HCT116 (cell line): ENCODE measurements at regions of chr10 and their contacts with region 1.

Region 1: GRCh38 chr10:128000471-128001362 is 93.8 kb downstream of the PTPRE start:
- DNase-seq: no peak
- ATAC-seq: 0 out of 2 replicates have a peak, but pooled peaks have one; percentile 40
- H3K4me3 ChIP-seq: no peak overlapping the region
- H3K27ac ChIP-seq: no peak overlapping the region
- H3K4me1 ChIP-seq: peaks cover 0 to 7% of the 10 kb centered on the region in 2 experiments; a peak in 1 of 4 replicates
- H3K27me3 ChIP-seq: peaks cover 10% of the 10 kb centered on the region; the same call in 1 of the 2 replicates
- CTCF ChIP-seq: no peak
- POLR2A ChIP-seq: no peak
- RAD21 ChIP-seq: no peak

Region 2: GRCh38 chr10:127889605-127890195 is 111.0 kb before region 1 on chr10:
- CTCF ChIA-PET with region 1: no interaction called
- POLR2A ChIA-PET with region 1: no interaction called
- RAD21 ChIA-PET with region 1: no interaction called
- intact Hi-C with region 1: no loop called
- DNase-seq: no peak
- ATAC-seq: peak; percentile 22; the same call in 1 of the 2 replicates
- H3K4me3 ChIP-seq: no peak overlapping the region
- H3K27ac ChIP-seq: no peak overlapping the region
- H3K4me1 ChIP-seq: no peaks in the 10 kb centered on the region
- H3K27me3 ChIP-seq: no peaks in the 10 kb centered on the region
- CTCF ChIP-seq: no peak
- POLR2A ChIP-seq: no peak
- RAD21 ChIP-seq: no peak

Region 3: DNA sequence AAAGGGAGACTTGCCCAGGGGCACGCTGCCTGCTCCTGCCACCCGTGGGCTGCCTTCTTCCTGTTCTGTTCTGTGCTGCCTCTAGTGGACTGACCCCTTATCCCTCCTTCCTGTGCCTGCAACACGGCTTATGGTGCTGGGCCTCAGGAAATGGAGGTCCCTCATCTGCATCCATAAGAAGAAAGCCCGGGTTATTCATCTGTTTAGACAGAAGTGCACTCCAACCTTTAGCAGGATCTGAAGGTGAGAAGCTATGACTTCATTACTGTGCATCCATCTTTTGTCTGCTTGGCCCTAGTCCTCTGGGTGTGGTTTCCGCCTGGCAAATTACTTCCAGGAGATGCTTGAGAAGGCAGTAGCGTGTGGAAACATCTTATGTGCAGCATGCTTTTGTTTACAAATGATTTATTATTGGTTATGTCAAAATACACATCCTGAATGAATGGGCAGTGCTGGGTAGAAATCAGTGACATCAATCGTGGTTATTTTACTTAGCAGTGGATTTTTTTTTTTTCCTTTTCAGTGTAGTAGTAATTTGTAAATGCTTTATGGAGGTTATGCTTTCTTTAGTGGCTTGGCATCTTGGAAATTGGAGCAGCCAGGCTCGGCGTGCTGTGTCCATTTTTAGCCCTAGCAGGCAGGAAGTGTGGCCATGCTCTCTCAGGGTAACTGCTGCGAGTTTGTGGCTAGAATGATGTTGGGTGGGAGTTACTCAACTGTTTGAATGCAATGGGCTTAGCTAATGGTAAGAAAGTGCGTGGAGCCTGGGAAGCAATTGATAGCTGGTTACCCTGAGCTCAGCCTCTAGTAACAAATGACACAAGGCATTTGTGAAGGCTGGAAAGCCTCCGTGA is 81.1 kb before region 1 on chr10:
- CTCF ChIA-PET with region 1: no interaction called
- POLR2A ChIA-PET with region 1: no interaction called
- RAD21 ChIA-PET with region 1: no interaction called
- intact Hi-C with region 1: no loop called
- DNase-seq: no peak
- ATAC-seq: peak; percentile 68
- H3K4me3 ChIP-seq: no peak overlapping the region
- H3K27ac ChIP-seq: no peak overlapping the region
- H3K4me1 ChIP-seq: peaks cover 21 to 58% of the 10 kb centered on the region in 2 experiments
- H3K27me3 ChIP-seq: no peaks in the 10 kb centered on the region
- CTCF ChIP-seq: peak in 2 of 3 experiments; percentile 66 to 67; a peak in 4 of 6 replicates
- POLR2A ChIP-seq: no peak
- RAD21 ChIP-seq: 0 out of 2 replicates have a peak, but pooled peaks have one; percentile 6

Region 4: DNA sequence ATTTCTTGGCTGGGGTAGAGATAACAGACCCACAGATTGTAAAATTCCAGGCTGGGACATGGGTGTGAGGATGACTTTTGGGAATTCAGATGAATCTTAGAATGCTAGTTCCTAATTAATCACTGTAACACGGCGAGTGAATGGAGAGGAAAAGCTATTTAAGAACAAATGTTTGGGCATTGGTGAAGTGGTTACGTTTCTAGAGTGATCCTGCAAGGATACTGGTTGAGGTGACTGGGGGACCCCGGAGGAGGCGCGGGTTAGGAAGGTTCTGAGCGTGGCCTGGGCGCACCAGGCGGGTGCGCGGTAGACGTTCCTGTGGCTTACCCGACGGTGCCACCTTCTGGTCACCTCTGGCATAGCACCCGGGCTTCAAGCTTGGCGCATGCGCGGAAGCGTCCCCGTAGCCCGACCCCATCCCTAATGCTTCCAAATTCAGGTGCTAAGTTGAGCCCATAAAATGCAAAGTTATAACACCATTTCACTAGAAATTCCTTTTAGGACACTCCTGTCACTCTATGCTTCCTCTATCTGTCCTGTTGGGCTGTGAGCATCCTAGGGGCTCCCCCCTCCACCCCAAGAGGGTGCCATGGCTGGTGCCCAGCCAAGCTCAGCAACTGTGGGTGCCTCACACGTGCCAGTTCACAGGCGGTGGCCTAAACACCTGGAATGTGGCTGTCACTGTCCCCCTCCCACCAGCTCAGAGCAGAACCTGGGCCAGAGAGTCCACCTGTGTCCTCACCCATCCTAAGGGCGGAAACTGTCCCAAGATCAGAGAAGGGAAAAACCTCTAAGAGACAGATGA is 10.7 kb after region 1 on chr10:
- CTCF ChIA-PET with region 1: interaction called, 10 read pairs
- POLR2A ChIA-PET with region 1: no interaction called
- RAD21 ChIA-PET with region 1: no interaction called
- intact Hi-C with region 1: no loop called
- DNase-seq: peak; percentile 54
- ATAC-seq: peak; percentile 95
- H3K4me3 ChIP-seq: no peak overlapping the region; a peak in 1 of 4 replicates
- H3K27ac ChIP-seq: no peak overlapping the region
- H3K4me1 ChIP-seq: peaks cover 3 to 9% of the 10 kb centered on the region in 2 experiments; a peak in 3 of 4 replicates
- H3K27me3 ChIP-seq: no peaks in the 10 kb centered on the region; the same call in 1 of the 2 replicates
- CTCF ChIP-seq: peak; percentile 98 to 99 (median 99)
- POLR2A ChIP-seq: no peak
- RAD21 ChIP-seq: peak; percentile 100

Region 5: DNA sequence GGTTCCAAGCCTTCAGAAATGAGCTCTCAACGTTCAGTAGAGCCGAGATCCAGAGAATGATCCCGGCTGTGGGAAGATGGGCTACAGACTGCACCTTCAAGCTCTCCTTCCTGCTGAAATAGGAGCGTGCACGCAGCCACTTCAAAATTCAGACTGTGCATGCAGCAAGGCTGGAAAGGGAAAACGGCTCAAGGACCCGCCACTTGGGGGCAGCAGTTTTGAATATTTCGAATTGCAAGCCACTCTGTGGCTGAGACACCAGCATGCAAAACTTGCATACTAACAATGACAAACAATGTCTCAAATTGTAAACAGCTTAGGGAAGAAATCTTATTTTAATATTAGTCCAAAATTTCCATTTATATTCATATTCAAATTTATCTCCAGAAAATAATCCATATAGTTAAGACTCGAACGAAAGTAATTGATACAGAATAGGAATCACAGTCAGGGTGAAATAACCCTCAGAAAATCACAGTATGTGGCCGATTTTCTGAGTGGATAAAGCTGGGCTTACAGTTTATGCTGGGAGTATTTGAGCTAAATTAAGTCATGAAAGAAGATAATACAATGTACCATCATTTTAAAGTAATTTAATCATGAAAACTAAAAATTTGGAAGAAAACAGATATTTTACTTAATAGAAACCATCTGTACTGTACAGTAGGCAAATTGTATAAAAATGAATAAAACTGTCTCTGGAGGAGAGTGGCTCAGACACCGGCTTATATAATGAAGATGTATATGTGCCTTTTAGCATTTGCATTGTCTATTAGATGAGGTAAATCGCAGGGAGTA is 263.4 kb after region 1 on chr10:
- CTCF ChIA-PET with region 1: no interaction called
- POLR2A ChIA-PET with region 1: no interaction called
- RAD21 ChIA-PET with region 1: no interaction called
- intact Hi-C with region 1: no loop called
- DNase-seq: peak; percentile 58
- ATAC-seq: peak; percentile 85
- H3K4me3 ChIP-seq: no peak overlapping the region
- H3K27ac ChIP-seq: no peak overlapping the region
- H3K4me1 ChIP-seq: no peaks in the 10 kb centered on the region
- H3K27me3 ChIP-seq: peaks cover 69% of the 10 kb centered on the region
- CTCF ChIP-seq: peak; percentile 57 to 88 (median 86); a peak in 5 of 6 replicates
- POLR2A ChIP-seq: no peak
- RAD21 ChIP-seq: peak; percentile 54

Region 6: GRCh38 chr10:128739930-128740329 is 739.2 kb after region 1 on chr10:
- CTCF ChIA-PET with region 1: no interaction called
- POLR2A ChIA-PET with region 1: no interaction called
- RAD21 ChIA-PET with region 1: no interaction called
- intact Hi-C with region 1: no loop called
- DNase-seq: peak; percentile 12
- ATAC-seq: peak; percentile 84
- H3K4me3 ChIP-seq: no peak overlapping the region
- H3K27ac ChIP-seq: no peak overlapping the region
- H3K4me1 ChIP-seq: no peaks in the 10 kb centered on the region
- H3K27me3 ChIP-seq: peaks cover 94% of the 10 kb centered on the region
- CTCF ChIP-seq: peak; percentile 31 to 36 (median 35); a peak in 4 of 6 replicates
- POLR2A ChIP-seq: no peak
- RAD21 ChIP-seq: peak; percentile 59